Activated B cell treated with CpG ODN at 0.5 μM for 24 hours (primary cell): ENCODE measurements at regions of chr6 and their contacts with region 1.

Region 1: DNA sequence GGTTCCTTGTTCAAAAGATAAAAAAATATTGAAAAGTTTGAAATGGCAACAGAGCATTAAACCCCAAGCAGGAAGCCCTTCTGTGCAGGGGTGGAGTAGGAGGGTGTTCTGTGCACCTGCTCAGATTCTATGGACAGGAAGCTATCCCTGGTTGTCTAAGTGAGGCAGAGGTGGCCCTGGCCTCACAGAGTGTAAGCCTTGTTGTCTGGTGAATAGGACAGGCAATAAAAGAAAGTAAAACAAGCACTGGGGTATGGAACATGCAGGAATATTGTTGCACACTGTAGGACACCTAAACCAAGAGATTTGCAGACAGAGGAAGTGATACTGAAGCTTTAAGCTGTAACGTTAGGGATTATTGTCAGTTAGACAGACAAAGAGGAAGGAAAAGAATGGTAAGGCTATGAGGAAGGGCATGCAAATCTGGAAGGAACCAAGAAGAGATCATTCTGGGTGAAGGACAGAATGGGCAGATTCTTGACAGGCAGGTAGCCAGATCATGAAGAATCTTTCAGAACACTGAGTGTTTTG is 66.8 kb downstream of the TBC1D7 start:
- DNase-seq: peak; percentile 57
- ATAC-seq: peak; percentile 74
- H3K4me3 Mint-ChIP-seq: peak overlapping the region; percentile 74
- H3K27ac Mint-ChIP-seq: peak overlapping the region; percentile 75
- H3K4me1 Mint-ChIP-seq: peaks cover 92% of the 10 kb centered on the region
- H3K27me3 Mint-ChIP-seq: no peaks in the 10 kb centered on the region
- CTCF ChIP-seq: no peak

Region 2: DNA sequence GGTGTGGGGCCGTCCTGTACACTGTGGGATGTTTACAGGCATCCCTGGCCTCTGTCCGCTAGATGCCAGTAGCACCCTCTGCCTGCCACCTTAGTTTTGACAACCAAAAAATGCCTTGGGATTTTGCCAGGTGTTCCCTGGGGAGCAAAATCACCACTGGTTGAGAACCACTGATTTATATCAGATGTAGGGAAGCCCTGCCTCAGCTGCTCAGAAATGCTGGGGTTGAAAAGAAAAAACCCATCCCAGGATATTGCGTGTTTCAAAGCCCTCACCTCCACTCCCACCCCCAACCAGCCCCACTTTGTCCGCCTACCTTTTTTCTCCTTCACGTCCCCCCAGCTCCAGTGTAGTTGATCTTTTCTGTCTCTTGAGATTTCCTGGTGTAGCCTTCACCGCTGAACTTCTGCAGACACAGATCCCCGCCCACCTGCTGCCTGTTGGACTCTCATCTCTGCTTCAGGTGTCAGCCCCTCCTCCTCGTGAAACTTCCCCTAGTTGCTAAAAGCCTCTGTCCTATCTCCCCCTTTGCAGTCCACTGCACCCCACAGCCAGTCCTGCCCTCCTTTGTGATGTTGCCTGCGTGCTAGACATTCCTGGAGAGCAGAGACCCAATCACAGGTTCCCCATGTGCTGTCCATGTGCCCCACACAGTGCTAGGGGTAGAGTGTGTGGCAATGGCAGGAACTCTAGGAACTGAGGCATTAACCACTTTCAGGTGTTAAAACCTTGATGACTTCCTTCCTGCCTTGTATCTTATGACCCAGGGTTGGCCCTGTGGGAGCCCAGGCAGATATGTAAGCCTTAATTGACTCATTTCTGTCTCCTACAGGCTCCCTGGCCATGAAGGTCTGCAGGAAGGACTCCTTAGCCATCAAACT is 32.1 kb before region 1 on chr6:
- CTCF ChIA-PET with region 1: no interaction called
- POLR2A ChIA-PET with region 1: interaction called, 6 read pairs
- intact Hi-C with region 1: loop called (anchors 2 kb)
- DNase-seq: peak; percentile 28
- ATAC-seq: peak; percentile 84
- H3K4me3 Mint-ChIP-seq: peak overlapping the region; percentile 7
- H3K27ac Mint-ChIP-seq: peak overlapping the region; percentile 27
- H3K4me1 Mint-ChIP-seq: peaks cover 30% of the 10 kb centered on the region
- H3K27me3 Mint-ChIP-seq: peaks cover 7% of the 10 kb centered on the region
- CTCF ChIP-seq: no peak